K562 (cell line): ENCODE measurements at regions of chr11 and their contacts with region 1.

Region 1: DNA sequence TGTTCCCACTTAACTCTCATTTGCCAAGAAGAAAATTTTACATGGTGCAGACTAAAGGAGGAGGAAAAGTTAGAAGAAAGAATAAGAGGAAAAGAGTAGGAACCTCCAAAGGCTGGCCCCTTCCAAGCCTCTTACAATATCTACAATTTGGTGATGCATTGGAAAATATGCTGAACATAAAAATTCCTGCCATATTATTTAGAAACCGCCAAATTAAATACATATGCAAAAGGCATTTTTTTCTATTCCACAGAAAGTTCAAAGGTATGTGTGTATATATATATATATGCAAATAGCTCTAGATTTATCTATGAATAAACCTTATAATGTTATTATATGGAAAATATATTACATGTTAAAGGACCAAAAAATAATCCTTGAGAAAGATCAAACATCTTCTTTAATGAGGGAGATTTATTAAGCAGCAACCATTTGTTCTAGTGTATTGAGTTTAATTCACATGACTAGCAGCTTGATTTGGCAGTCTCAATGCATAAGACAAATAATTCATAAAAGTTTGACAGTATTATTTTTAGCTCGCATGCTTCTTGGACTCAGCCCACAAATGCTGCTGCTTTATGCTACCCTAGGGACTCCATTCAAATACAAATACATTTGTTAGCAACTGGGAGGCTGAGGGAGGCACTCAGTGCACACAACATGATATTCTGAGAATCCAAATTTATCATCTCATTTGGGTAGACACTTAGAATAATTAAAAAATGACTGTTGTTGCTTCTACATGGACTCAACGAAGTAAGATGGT is 184.9 kb downstream of the SBF2 start:
- DNase-seq: no peak
- ATAC-seq: no peak
- H3K4me3 ChIP-seq: no peak overlapping the region
- H3K27ac ChIP-seq: no peak overlapping the region
- H3K4me1 ChIP-seq: no peaks in the 10 kb centered on the region
- H3K27me3 ChIP-seq: peaks cover 0 to 4% of the 10 kb centered on the region in 2 experiments; a peak in 2 of 5 replicates
- CTCF ChIP-seq: no peak
- EP300 ChIP-seq: no peak
- POLR2A ChIP-seq: no peak
- RAD21 ChIP-seq: no peak

Region 2: GRCh38 chr11:10122326-10123197 is 13.5 kb after region 1 on chr11:
- CTCF ChIA-PET with region 1: no interaction called
- POLR2A ChIA-PET with region 1: no interaction called
- in situ Hi-C with region 1: no loop called
- intact Hi-C with region 1: no loop called
- DNase-seq: no peak
- ATAC-seq: no peak
- H3K4me3 ChIP-seq: no peak overlapping the region
- H3K27ac ChIP-seq: no peak overlapping the region
- H3K4me1 ChIP-seq: no peaks in the 10 kb centered on the region
- H3K27me3 ChIP-seq: peaks cover 0 to 4% of the 10 kb centered on the region in 2 experiments; a peak in 1 of 5 replicates
- CTCF ChIP-seq: no peak
- EP300 ChIP-seq: no peak
- POLR2A ChIP-seq: no peak
- RAD21 ChIP-seq: no peak

Region 3: DNA sequence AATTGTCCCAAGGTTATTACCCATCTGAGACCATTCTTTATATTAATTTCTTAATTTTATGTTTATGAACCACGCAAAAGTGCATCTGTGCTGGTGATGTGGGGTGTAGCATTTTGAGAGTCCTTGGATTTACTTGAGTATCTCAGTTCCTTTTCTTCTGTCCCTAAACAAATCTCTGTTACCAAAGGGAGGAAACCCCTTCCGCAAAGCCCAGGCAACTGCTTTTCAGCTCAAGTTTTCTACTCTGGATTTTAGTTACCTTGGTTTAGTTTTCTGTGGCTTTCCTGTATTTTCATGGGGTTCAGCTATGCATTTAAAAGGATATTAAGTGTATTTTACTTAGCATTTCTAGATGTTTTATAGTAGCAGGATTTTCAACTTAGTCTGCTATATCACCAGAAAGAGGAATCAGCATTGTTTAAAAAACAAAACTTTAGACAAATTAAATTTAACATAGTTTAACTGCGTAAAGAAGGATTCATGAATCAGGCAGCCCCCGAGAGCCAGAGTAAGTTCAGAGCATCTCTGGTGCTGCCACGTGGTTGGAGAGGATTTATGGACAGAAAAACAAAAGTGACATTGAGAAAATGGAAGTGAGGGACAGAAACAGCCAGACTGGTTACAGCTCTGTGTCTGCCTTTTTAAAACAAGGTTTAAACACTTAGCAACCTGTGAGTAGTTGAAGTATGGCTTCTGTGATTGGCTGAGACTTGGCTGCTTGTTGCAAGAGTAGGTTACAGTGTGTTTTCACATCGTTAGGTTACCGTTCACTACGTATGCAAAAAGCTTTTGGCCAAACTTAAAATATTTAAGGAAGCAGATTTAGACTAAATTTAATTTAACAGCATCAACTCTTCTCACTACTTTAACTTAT is 205.3 kb after region 1 on chr11:
- CTCF ChIA-PET with region 1: no interaction called
- POLR2A ChIA-PET with region 1: no interaction called
- in situ Hi-C with region 1: no loop called
- intact Hi-C with region 1: loop called (anchors 10 kb)
- DNase-seq: peak in 1 of 4 experiments; percentile 10
- ATAC-seq: peak; percentile 64
- H3K4me3 ChIP-seq: no peak overlapping the region
- H3K27ac ChIP-seq: no peak overlapping the region
- H3K4me1 ChIP-seq: peaks cover 0 to 6% of the 10 kb centered on the region in 2 experiments; a peak in 2 of 5 replicates
- H3K27me3 ChIP-seq: peaks cover 0 to 4% of the 10 kb centered on the region in 2 experiments; a peak in 2 of 5 replicates
- CTCF ChIP-seq: no peak
- EP300 ChIP-seq: no peak
- POLR2A ChIP-seq: no peak
- RAD21 ChIP-seq: no peak